HepG2 (cell line): ENCODE measurements at regions of chr1 and their contacts with region 1.

Region 1: GRCh38 chr1:94599095-94599813 is 57.7 kb upstream of the F3 start:
- DNase-seq: peak; percentile 43
- ATAC-seq: peak; percentile 91
- H3K4me3 ChIP-seq: no peak overlapping the region
- H3K27ac ChIP-seq: no peak overlapping the region
- H3K4me1 ChIP-seq: peaks cover 32% of the 10 kb centered on the region
- H3K27me3 ChIP-seq: peaks cover 0 to 4% of the 10 kb centered on the region in 2 experiments; a peak in 1 of 5 replicates
- CTCF ChIP-seq: peak; percentile 67
- EP300 ChIP-seq: no peak
- POLR2A ChIP-seq: no peak
- RAD21 ChIP-seq: peak; percentile 68

Region 2: DNA sequence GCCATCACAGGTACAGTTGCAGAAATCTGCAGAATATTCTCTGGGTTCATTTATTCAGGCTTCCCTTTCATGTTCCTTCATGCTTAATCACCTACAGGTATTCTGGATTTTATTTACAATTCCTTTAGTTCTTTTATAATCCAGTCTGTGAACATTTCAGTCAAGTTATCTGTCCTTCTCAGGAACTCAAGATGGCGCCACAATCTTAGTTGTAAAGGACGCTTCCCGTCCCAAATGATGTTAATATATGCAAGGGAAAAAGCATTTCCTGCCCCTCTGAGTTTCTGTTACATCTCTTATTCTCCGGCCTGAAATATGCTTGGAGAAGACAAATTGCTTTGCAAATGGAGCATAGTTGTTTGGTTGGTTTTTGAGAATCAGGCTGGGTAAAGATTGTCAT is 77.0 kb before region 1 on chr1:
- CTCF ChIA-PET with region 1: no interaction called
- POLR2A ChIA-PET with region 1: no interaction called
- in situ Hi-C with region 1: loop called (anchors 5 kb)
- intact Hi-C with region 1: loop called (anchors 5 kb)
- DNase-seq: no peak
- ATAC-seq: no peak
- H3K4me3 ChIP-seq: no peak overlapping the region
- H3K27ac ChIP-seq: no peak overlapping the region
- H3K4me1 ChIP-seq: no peaks in the 10 kb centered on the region
- H3K27me3 ChIP-seq: no peaks in the 10 kb centered on the region
- CTCF ChIP-seq: peak; percentile 47
- EP300 ChIP-seq: no peak
- POLR2A ChIP-seq: no peak
- RAD21 ChIP-seq: no peak

Region 3: DNA sequence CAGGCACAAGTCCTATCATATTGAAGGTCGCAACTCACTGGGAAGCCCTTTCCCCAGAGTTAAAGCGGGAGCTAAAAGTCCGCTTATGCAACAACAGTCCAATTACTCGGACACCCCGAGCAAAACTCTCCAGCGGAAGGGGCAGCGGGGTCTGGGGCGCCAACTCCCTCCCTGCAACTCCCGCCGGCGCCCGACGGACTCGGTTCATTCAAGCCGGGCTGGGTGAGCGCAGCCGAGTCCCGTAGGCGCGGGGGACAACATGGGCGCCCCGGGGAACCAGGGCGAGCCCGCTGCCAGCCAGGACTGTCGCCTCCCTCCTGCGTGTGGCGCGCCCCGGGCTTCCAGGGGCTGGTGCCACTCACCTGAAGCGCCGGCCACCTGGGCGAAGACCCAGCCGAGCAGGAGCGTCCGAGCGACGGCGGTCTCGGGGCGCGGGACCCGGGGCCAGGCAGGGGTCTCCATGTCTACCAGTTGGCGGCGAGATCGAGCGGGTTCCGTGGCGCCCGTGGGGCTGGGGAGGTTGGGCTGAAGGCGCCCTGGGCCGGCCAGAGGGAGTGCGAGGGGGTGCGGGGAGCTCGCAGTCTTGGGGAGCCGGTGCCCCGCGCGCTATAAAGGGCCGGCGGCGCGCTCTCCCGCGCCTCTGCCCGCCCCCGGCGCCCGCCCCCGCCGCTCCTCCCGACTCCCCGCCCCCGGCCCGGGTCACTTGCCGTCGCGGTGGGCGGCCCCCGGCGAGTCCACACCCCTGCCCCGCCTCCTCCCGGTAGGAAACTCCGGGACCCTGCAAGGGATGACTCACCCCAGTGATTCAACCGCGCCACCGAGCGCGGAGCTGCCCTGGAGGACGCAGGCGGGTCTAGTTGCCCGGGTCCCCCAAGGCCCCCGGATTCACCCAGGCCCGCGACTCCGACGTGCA is 57.8 kb before region 1 on chr1 and contains the start of gene F3:
- CTCF ChIA-PET with region 1: no interaction called
- POLR2A ChIA-PET with region 1: no interaction called
- in situ Hi-C with region 1: no loop called
- intact Hi-C with region 1: loop called (anchors 5 kb)
- DNase-seq: peak; percentile 72
- ATAC-seq: peak; percentile 90
- H3K4me3 ChIP-seq: peak within 1 kb of the TSS; percentile 54 to 90 (median 84)
- H3K27ac ChIP-seq: peak within 1 kb of the TSS; percentile 70
- H3K4me1 ChIP-seq: peaks cover 67% of the 10 kb centered on the region
- H3K27me3 ChIP-seq: no peaks in the 10 kb centered on the region
- CTCF ChIP-seq: peak; percentile 37
- EP300 ChIP-seq: no peak
- POLR2A ChIP-seq: peak; percentile 51 to 88
- RAD21 ChIP-seq: no peak
- total RNA-seq, gene F3: 3.4 and 9.0 TPM in 2 replicates

Region 4: DNA sequence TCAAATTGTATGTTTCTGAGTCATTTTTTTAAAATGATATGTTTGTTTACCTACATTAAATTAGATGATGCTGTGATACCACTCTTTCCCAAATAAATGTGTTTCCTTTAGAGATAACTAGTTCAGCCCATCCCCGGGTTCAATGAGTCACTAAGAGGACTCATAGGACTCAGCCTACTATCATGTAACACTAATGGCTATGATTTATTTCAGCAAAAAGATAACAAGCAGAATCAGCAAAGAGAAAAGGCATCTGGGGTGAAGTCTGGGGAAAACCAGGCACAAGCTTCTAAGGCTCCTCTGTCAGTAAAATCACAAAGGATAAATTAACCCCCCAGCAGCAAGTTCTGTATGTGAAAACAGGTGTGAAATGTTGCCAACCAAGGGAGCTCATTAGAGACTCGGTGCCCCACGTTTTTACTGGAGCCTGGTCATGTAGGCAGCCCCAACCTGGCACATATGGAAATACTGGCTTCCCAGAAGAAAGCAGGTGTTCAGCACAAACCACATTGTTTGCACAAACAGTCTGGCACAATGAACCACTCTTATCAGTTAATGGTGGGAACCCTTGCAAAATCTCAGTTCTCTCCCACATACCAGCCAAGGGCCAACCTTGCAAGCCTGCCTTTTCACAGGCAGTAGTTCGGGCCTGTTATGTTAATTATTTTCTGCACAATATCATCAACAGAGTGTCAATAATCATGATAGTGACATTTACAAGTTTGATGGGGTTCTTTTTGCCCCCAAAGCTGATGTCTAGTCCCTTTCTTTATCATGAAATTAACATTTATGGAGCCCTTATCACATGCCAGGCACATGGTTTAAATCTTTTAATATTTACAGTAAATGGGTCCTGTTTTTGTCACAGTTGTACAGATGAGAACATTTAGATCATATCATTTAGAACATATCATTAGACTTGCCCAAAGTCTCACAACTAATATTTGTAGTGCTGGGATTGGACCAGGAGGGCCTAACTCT is 350.7 kb after region 1 on chr1:
- CTCF ChIA-PET with region 1: no interaction called
- POLR2A ChIA-PET with region 1: no interaction called
- in situ Hi-C with region 1: no loop called
- intact Hi-C with region 1: no loop called
- DNase-seq: peak; percentile 79
- ATAC-seq: peak; percentile 94
- H3K4me3 ChIP-seq: no peak overlapping the region
- H3K27ac ChIP-seq: no peak overlapping the region
- H3K4me1 ChIP-seq: peaks cover 48% of the 10 kb centered on the region
- H3K27me3 ChIP-seq: no peaks in the 10 kb centered on the region
- CTCF ChIP-seq: no peak
- EP300 ChIP-seq: peak in 1 of 2 experiments; percentile 18; a peak in 1 of 4 replicates
- POLR2A ChIP-seq: no peak
- RAD21 ChIP-seq: no peak